Activated CD4-positive, alpha-beta T cell treated with anti-CD3 and anti-CD28 coated beads for 36 hours (primary cell): ENCODE measurements at regions of chr6 and their contacts with region 1.

Region 1: GRCh38 chr6:154156135-154156896 is 117.3 kb downstream of the OPRM1 start:
- DNase-seq: peak; percentile 84
- ATAC-seq: peak; percentile 95
- H3K4me3 Mint-ChIP-seq: peak overlapping the region; percentile 64
- H3K27ac Mint-ChIP-seq: peak overlapping the region; percentile 86
- H3K4me1 Mint-ChIP-seq: peaks cover 54% of the 10 kb centered on the region
- H3K27me3 Mint-ChIP-seq: no peaks in the 10 kb centered on the region

Region 2: GRCh38 chr6:154080461-154081189 is 75.7 kb before region 1 on chr6:
- CTCF ChIA-PET with region 1: no interaction called
- POLR2A ChIA-PET with region 1: no interaction called
- intact Hi-C with region 1: no loop called
- DNase-seq: no peak
- ATAC-seq: no peak
- H3K4me3 Mint-ChIP-seq: no peak overlapping the region
- H3K27ac Mint-ChIP-seq: no peak overlapping the region
- H3K4me1 Mint-ChIP-seq: no peaks in the 10 kb centered on the region
- H3K27me3 Mint-ChIP-seq: peaks cover 2% of the 10 kb centered on the region

Region 3: DNA sequence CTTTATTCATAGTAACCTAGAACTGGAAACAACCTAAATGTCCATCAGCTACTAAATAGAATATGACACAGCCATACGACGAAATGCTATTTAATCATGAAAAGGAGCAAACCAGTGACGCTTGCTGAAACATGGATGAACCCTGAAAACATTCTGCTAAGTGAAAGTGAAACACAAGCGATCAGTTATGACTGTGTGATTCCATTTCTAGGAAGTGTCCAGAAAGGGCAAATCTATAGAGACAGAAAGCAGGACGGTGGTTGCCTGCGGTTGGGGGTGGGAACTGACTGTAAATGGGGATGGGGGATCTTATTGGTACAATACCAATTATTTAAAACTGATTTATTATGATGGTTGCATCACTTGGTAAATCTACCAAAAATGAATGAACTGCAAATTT is 73.5 kb after region 1 on chr6:
- CTCF ChIA-PET with region 1: interaction called, 11 read pairs
- POLR2A ChIA-PET with region 1: no interaction called
- intact Hi-C with region 1: loop called (anchors 2 kb)
- DNase-seq: peak; percentile 82
- ATAC-seq: peak; percentile 71
- H3K4me3 Mint-ChIP-seq: peak overlapping the region; percentile 58
- H3K27ac Mint-ChIP-seq: peak overlapping the region; percentile 92
- H3K4me1 Mint-ChIP-seq: peaks cover 83% of the 10 kb centered on the region
- H3K27me3 Mint-ChIP-seq: no peaks in the 10 kb centered on the region

Region 4: GRCh38 chr6:154276810-154277628 is 120.7 kb after region 1 on chr6:
- CTCF ChIA-PET with region 1: interaction called, 130 read pairs
- POLR2A ChIA-PET with region 1: no interaction called
- intact Hi-C with region 1: loop called (anchors 1 kb)
- DNase-seq: no peak
- ATAC-seq: peak; percentile 78
- H3K4me3 Mint-ChIP-seq: peak overlapping the region; percentile 63
- H3K27ac Mint-ChIP-seq: peak overlapping the region; percentile 84
- H3K4me1 Mint-ChIP-seq: peaks cover 29% of the 10 kb centered on the region
- H3K27me3 Mint-ChIP-seq: no peaks in the 10 kb centered on the region

Region 5: GRCh38 chr6:154410619-154411072 is 254.3 kb after region 1 on chr6:
- CTCF ChIA-PET with region 1: no interaction called
- POLR2A ChIA-PET with region 1: no interaction called
- intact Hi-C with region 1: loop called (anchors 2 kb)
- DNase-seq: peak; percentile 76
- ATAC-seq: peak; percentile 98
- H3K4me3 Mint-ChIP-seq: no peak overlapping the region
- H3K27ac Mint-ChIP-seq: peak overlapping the region; percentile 49
- H3K4me1 Mint-ChIP-seq: peaks cover 11% of the 10 kb centered on the region
- H3K27me3 Mint-ChIP-seq: peaks cover 14% of the 10 kb centered on the region

Region 6: DNA sequence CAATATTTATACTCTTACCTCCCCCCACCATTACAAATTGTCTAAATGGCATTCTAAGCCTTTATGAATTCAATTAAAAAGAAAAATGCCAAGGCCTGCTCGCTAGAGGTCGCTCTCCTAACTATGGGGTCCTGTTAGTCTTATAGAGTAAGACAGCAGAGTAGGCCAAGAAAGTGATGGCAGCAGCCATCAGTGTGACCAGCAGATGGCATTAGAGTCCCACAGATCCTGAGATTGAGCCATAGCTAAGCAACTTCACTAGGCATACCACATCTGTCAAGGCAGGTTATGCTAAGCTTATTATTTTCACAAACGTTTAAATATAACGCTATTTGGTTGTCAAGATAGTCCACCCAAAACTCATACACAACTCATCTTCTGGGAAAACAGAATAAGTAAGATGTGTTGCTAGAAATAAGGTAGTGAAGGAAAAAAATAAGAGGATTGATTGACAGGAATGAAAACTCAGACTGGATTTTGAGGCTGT is 519.3 kb after region 1 on chr6:
- CTCF ChIA-PET with region 1: interaction called, 3 read pairs
- POLR2A ChIA-PET with region 1: no interaction called
- intact Hi-C with region 1: loop called in 1 of 2 experiments (anchors 2 kb)
- DNase-seq: peak; percentile 91
- ATAC-seq: peak; percentile 100
- H3K4me3 Mint-ChIP-seq: no peak overlapping the region
- H3K27ac Mint-ChIP-seq: no peak overlapping the region
- H3K4me1 Mint-ChIP-seq: no peaks in the 10 kb centered on the region
- H3K27me3 Mint-ChIP-seq: no peaks in the 10 kb centered on the region